Left cardiac atrium (tissue), 4 donors: ENCODE measurements at regions of chr5 and their contacts with region 1.

Region 1: DNA sequence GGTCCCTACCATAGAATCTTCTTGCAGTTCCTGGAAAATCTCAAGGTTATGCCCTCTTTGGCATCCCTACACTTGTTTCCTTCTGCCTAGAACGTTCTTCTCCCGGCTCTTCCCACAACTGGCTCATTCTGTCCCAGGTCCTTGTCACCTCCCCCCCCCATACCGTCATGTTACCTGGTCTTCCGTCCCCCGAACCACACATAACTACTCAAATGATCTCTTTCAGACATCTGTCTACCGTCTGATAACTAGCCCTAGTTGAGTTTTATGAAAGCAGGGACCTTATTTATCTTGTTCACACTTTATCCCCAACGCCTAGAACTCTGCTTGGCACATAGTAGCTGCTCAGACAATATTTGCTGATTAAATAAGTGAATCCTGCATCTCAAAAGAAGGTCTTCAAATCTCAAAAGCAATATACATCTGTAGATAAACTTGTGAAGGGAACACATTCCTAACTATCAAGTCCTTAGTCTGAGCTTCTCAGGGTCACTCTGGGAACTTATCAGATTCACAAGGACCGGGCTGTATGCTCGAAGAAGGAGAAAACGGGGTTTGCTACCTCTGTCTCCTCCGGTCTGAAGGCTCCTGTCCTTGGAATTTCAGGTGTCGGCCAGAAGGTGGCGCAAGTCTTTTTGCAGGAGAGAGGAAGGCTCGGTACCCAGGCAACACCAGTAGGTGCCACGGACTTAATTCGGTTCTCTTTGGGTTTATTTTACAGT is 30.0 kb downstream of the LCP2 start:
- DNase-seq: peak; percentile 78
- ATAC-seq: peak; percentile 71 to 77

Region 2: DNA sequence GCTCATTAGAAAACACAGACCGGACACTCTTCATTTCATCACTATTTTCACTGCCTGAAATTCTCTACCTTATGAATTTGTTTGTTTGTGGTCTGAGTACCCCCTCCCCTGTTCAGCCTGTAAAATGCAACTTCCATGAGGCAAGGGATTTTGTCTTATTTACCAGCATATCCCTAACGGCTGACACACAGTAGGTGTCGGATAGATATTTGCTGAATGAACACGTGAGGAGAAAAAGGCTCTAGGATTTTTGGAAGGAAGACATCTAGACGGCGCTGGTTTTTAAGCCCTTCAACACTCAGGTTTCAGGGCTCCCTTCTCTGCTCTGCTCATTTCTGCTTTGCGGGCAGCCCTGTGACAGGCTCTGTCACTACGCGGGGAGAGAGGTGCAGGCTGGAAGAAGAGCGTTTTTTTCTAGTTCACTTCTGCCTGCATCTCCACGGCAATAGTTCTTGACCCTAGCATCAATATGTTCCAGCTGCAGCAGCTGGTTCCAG is 80.6 kb after region 1 on chr5:
- intact Hi-C with region 1: loop called (anchors 5 to 10 kb)
- DNase-seq: no peak
- ATAC-seq: peak; percentile 32 to 53

Region 3: GRCh38 chr5:170420780-170421412 is 153.3 kb after region 1 on chr5:
- intact Hi-C with region 1: loop called (anchors 2 to 5 kb)
- DNase-seq: peak; percentile 65
- ATAC-seq: peak; percentile 76 to 77